ENCODE measurements at regions of chr19 and their contacts with region 1.

Region 1: GRCh38 chr19:42283143-42284065 is 14.4 kb downstream of the CIC start:
- DNase-seq: peak; percentile 98

Region 2: DNA sequence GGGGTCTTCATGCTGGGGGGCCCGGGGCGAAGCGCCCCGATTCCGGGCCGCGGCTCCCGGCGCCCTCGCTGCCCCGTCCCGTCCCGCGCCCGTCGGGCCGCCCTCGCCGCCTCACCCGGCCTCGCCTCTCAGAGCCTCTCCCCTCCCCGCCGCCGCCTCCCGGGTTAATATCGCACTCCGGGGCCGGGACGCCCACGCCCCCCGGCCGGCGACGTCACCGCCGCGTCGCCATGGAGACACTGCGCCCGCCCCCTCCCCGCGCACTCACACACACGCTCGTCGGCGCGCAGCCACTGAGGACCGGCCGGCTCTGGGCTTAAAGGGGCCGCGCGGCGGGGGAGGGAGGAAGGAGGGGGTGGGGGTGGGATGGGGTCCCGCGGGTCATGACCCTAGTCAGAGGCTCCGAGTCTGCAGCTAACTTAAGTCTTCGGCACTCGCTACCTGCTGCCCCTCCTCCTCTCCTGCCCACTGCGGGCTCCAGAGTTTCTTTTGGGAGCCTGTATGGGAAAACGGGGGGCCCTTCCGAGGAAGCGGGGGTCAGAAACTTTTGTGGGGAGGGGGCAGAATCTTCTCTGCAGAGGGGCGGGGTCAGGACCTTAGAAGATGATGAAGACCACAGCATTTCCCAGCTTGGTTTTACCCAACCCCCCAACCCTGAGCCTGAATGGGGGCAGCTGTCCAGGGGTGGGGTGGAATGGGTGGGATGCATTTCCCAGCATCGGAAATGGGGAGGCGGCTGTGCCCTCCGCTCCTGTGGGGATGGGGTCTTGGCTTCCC is 28.2 kb before region 1 on chr19 and contains the start of gene ERF:
- intact Hi-C with region 1: loop called (anchors 1 kb)
- DNase-seq: peak; percentile 98
- total RNA-seq, gene ERF: 37.4 TPM

Region 3: DNA sequence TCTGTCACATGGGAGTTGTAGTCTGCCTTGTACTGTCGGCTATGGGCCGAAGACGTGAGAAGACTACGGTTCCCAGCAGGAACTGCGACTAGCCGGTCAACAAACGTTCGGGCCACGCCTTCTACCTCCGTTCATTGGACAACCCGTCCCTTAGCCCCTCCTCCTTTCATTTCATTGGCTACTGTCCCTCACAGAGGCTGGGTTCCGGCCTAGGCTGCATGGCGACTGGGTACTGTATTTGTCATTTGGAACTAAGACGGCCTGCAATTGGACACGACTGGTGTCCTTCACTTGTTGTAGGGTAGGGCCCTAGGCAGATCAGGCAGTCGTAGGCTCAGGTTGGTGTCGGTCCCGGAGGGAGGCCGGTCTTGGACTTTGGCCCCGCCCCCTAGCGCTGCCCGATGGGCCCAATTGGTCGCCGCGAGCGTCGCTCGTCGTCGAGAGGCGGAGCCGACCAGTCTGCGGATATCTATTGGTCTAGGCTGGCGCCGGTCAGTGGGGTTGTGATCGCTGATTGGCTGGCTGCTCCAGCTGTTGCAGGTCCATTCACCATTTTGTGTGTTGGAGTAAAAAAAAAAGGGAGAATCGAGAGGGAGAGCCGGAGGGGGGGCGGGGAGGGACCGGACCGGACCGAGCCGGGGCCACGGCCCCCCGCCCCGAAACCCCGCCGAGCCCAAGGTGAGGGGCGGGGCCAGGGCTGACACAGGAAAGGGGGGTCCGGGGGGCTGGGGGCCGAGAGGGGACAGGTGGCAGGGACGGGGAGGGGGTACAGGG is 14.5 kb before region 1 on chr19 and contains the start of gene CIC:
- intact Hi-C with region 1: loop called (anchors 2 kb)
- DNase-seq: peak; percentile 100
- total RNA-seq, gene CIC: 51.3 TPM

Measured in cardiac septum (tissue), 1 donor.